MCF 10A (cell line): ENCODE measurements at regions of chr3 and their contacts with region 1.

Region 1: GRCh38 chr3:123660900-123661299 is 76.0 kb upstream of the HACD2 start:
- DNase-seq: peak; percentile 84
- H3K4me3 Mint-ChIP-seq: no peak overlapping the region
- H3K27ac Mint-ChIP-seq: no peak overlapping the region
- H3K4me1 Mint-ChIP-seq: peaks cover 9% of the 10 kb centered on the region
- H3K27me3 Mint-ChIP-seq: peaks cover 34% of the 10 kb centered on the region
- CTCF ChIP-seq: no peak

Region 2: DNA sequence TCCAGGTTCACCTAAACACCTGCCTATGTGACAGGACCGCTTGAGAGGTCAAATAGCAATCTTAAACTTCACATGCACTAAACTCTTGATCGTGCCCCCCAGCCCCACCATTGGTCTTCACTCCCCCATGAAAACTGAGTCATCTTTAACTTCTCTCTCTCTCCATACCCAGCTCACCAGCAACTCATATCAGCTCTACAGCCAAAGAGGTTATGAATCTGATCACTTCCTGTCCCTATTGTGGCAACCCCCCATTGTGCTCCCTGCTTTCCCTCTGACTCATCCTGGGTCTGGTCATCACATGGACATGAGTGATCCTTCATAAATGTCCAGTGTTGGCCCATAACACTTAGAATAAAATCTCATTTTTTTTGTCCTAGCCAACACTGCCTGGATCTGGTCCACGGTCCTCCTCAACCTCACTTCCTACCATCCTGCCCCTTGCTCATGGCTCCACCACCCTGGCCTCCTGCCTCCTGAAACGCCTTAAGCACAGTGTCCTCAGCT is 27.4 kb after region 1 on chr3:
- CTCF ChIA-PET with region 1: no interaction called
- POLR2A ChIA-PET with region 1: no interaction called
- intact Hi-C with region 1: no loop called
- DNase-seq: peak; percentile 76
- H3K4me3 Mint-ChIP-seq: no peak overlapping the region
- H3K27ac Mint-ChIP-seq: no peak overlapping the region
- H3K4me1 Mint-ChIP-seq: peaks cover 17% of the 10 kb centered on the region
- H3K27me3 Mint-ChIP-seq: no peaks in the 10 kb centered on the region
- CTCF ChIP-seq: no peak

Region 3: GRCh38 chr3:123700791-123701722 is 40.2 kb after region 1 on chr3:
- CTCF ChIA-PET with region 1: interaction called, 162 read pairs
- POLR2A ChIA-PET with region 1: no interaction called
- intact Hi-C with region 1: no loop called
- DNase-seq: no peak
- H3K4me3 Mint-ChIP-seq: no peak overlapping the region
- H3K27ac Mint-ChIP-seq: no peak overlapping the region
- H3K4me1 Mint-ChIP-seq: peaks cover 5% of the 10 kb centered on the region
- H3K27me3 Mint-ChIP-seq: no peaks in the 10 kb centered on the region
- CTCF ChIP-seq: no peak